ENCODE measurements at regions of chr3 and their contacts with region 1.

Region 1: DNA sequence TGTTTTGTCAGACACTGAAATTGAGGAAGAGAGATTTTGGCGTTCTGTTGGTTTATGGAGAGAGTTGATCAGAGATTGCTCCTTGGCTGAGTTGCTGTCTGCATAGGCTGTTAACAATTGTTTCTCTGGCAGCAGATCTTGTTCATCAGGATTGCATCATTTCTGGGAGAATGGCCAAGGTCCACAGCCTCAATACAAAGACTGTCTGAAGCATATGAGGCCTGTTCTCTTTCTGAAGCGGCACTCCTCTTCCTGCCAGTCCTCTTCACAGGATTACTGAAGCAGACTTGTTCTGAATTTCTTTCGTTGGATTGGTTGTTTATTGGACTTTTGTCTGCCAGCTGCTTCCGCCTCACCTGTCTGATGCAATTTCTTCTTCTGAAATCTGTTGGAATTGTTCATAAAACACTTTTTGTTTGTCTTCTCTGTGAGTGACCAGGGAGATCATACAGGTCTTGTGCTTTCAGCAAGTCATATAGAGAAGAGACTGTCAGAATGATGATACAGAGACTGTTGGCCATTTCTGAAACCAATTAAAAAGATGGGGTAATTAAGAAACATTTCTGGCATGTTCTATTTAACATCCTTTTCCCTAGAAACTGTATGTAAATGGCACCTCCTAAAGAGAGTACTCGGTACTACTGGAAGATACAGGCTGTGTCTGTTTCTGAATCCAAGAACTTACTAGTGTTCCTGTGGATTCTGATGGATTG is 25.5 kb downstream of the SETD5 start:
- DNase-seq: peak; percentile 85
- H3K4me3 ChIP-seq: no peak overlapping the region
- CTCF ChIP-seq: peak; percentile 43

Region 2: DNA sequence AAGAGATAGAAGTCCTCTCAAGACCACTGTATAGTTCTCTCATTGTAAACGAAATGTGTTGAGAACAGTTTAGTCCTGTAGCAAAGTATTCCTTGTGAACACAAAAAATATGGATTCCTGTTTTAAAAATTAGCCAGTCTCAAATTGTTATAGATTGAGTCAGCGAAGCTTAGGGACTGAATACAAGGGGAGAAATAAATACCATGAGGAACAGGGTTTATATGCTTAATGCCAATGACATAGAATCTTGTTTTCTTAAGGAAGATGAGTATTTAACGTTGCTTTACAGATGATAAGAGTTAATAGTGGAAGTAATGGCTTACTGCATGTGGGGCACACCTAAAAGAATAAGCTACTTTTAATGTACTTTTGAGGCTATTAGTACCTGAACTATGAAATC is 12.4 kb after region 1 on chr3:
- CTCF ChIA-PET with region 1: interaction called, 12 read pairs
- POLR2A ChIA-PET with region 1: interaction called, 3 read pairs
- DNase-seq: no peak
- H3K4me3 ChIP-seq: no peak overlapping the region
- CTCF ChIP-seq: no peak

Measured in AG04449 (cell line).